Gastrocnemius medialis (tissue), 4 donors: ENCODE measurements at regions of chr20 and their contacts with region 1.

Region 1: DNA sequence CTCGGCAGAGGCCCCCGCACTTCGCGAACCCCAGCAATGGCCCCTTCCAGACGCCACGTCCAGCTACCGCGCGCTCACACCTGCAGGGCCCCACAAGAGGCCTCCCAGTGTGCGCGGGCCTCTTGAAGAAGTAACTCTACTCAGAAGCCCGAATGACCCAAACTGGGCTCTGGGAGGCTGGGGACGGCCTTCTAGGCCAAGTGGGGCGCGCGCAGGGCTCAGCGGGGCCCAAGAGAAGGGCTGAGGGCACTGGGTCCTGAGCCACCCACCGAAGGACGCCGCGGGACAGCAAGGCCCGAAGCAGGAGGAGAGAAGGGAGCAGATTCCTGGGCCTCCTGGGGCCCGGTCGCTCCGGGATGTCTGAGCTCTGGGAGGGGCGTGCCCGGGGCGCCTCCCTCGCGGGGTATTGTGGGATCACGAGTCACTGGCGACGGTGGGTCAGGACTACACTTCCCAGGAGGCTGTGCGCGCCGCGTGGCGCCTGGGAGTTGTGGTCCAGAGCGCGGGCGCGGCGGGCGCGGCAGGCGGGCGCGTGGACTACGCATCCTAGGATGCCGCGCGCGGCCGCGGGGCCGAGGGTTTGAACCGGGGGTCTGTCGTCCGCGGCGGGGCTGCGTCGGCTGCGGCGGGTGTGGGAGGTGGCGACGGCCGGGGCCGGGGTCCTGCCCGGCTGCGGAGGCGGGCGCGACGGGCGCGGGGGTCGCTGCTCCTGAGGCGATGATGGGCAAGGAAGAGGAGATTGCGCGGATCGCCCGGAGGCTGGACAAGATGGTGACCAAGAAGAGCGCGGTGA is at the start of gene TCEA2:
- DNase-seq: peak; percentile 93 to 94
- ATAC-seq: peak; percentile 94
- H3K4me3 ChIP-seq: peak within 1 kb of the TSS; percentile 72 to 99 (median 76)
- H3K27ac ChIP-seq: peak within 1 kb of the TSS; percentile 70 to 91 (median 79)
- H3K4me1 ChIP-seq: peaks cover 10 to 24% of the 10 kb centered on the region in 2 donors
- H3K27me3 ChIP-seq: no peaks in the 10 kb centered on the region
- CTCF ChIP-seq: no peak
- POLR2A ChIP-seq: peak; percentile 63
- total RNA-seq, gene TCEA2: 8.4 to 21.0 (median 8.8) TPM

Region 2: DNA sequence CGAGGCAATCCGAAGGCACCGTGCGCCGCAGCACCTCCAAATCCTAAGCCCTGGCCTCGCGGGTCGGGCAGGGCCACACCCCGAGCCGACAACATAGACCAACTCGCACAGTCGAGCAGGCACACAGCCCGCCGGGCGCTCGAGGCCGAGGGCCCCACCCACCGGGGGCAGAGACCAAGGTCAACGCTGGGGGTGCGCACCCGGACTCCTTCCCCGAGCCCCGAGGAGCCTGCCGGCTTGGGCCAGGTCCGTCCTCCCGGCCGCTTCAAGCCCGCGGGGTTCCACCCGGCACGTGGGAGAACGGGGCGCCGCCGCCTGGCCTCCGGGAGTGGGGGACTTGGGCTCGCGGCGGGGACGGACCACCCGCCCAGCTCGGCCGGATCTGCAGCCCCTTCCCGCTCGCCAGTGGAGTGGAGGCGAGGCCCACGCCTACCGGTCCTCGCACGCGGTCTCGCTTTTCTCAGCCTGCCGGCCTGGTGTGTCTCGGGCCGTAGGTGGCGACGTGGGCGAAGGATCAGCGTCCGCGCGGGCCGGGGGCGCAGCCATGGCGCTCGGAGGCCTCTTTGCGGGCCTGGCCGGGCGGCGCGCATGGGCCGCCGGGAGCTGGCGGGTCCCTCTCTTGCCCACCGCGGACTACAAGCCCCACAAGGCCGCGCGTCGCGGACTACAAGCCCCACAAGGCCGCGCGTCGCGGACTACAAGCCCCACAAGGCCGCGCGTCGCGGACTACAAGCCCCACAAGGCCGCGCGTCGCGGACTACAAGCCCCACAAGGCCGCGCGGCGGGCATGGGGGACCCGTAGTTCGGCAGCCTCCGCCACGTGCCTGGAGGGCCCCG is 106.7 kb before region 1 on chr20 and contains the start of gene UCKL1:
- in situ Hi-C with region 1: no loop called
- intact Hi-C with region 1: loop called (anchors 5 kb)
- DNase-seq: peak; percentile 85 to 91
- ATAC-seq: peak; percentile 72
- H3K4me3 ChIP-seq: peak within 1 kb of the TSS; percentile 76 to 99 (median 86)
- H3K27ac ChIP-seq: peak within 1 kb of the TSS; percentile 92 to 98 (median 96)
- H3K4me1 ChIP-seq: peaks cover 34 to 59% of the 10 kb centered on the region in 2 donors
- H3K27me3 ChIP-seq: no peaks in the 10 kb centered on the region
- CTCF ChIP-seq: peak in 1 of 5 experiments; percentile 7
- POLR2A ChIP-seq: peak; percentile 90 to 93
- total RNA-seq, gene UCKL1: 22.0 to 46.4 (median 27.1) TPM

Region 3: DNA sequence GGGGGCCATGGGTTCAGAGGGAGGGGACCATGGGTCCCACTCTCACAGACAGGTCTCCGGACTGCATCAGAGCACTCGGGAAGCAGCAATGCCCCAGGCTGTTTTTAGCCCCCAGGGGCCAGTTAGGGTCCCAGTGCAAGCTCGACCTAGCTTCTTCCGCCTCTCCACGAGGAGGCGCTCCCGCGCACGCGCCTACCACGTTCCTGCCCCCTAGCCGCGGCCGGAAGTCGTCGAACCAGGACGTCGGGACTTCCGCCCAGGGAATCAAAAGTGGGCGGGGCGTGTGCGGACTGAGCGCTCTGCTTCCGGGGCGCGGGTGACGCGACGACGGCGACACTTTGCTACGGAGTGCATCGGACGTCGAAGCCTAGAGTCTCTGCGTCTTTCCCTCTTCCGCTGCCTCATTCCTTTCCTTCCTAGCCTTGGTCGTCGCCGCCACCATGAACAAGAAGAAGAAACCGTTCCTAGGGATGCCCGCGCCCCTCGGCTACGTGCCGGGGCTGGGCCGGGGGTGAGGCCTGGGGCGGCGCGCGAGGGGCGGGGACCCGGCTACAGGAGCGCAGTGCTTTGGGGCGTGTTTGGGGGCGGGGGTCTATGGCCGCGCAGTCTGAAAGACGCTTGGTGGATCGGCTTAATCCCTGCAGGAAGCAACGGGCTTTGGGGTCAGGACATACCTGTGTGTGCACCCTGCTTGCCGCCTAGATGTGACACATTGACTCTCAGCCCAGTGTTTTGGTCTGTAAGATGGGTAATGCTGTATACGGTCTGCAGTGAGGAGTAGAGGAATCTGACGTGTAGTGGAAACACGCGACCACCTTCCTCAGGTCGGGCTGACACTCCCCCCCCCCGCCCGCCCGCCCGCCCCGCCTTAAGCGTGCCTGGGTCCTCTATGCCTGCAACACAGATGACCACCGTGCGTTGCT is 81.7 kb before region 1 on chr20 and contains the start of gene PRPF6:
- in situ Hi-C with region 1: no loop called
- intact Hi-C with region 1: loop called (anchors 2 kb)
- DNase-seq: peak; percentile 90
- ATAC-seq: peak; percentile 93 to 94
- H3K4me3 ChIP-seq: peak within 1 kb of the TSS; percentile 90 to 100 (median 98)
- H3K27ac ChIP-seq: peak within 1 kb of the TSS; percentile 75 to 88 (median 82)
- H3K4me1 ChIP-seq: peaks cover 22 to 28% of the 10 kb centered on the region in 2 donors
- H3K27me3 ChIP-seq: peaks cover 0 to 17% (median 7%) of the 10 kb centered on the region in 3 donors
- CTCF ChIP-seq: peak; percentile 61 to 81 (median 76)
- POLR2A ChIP-seq: peak; percentile 28 to 76
- total RNA-seq, gene PRPF6: 39.3 to 68.4 (median 47.7) TPM

Region 4: GRCh38 chr20:64083378-64083803 is 20.6 kb after region 1 on chr20:
- in situ Hi-C with region 1: no loop called
- intact Hi-C with region 1: loop called (anchors 1 kb)
- DNase-seq: no peak
- ATAC-seq: peak; percentile 35 to 43
- H3K4me3 ChIP-seq: peak overlapping the region; percentile 42 to 64 (median 54)
- H3K27ac ChIP-seq: no peak overlapping the region
- H3K4me1 ChIP-seq: peaks cover 12 to 14% of the 10 kb centered on the region in 2 donors
- H3K27me3 ChIP-seq: peaks cover 23 to 39% (median 35%) of the 10 kb centered on the region in 3 donors
- CTCF ChIP-seq: peak in 4 of 5 experiments; percentile 37 to 60 (median 59)
- POLR2A ChIP-seq: no peak